ENCODE measurements at regions of chr19 and their contacts with region 1.

Region 1: GRCh38 chr19:41883821-41884733 is 1.1 kb downstream of the ARHGEF1 start:
- DNase-seq: peak; percentile 69 to 91 (median 79)
- ATAC-seq: peak; percentile 82
- H3K4me3 ChIP-seq: peak overlapping the region; percentile 99
- H3K4me3 Mint-ChIP-seq: peak overlapping the region; percentile 92 to 100 (median 98)
- H3K27ac ChIP-seq: peak overlapping the region; percentile 84
- H3K27ac Mint-ChIP-seq: peak overlapping the region; percentile 93 to 99 (median 98)
- H3K4me1 ChIP-seq: peaks cover 34 to 44% of the 10 kb centered on the region in 2 donors
- H3K4me1 Mint-ChIP-seq: peaks cover 41 to 58% (median 51%) of the 10 kb centered on the region in 7 donors
- H3K27me3 ChIP-seq: no peaks in the 10 kb centered on the region
- H3K27me3 Mint-ChIP-seq: no peaks in the 10 kb centered on the region

Region 2: DNA sequence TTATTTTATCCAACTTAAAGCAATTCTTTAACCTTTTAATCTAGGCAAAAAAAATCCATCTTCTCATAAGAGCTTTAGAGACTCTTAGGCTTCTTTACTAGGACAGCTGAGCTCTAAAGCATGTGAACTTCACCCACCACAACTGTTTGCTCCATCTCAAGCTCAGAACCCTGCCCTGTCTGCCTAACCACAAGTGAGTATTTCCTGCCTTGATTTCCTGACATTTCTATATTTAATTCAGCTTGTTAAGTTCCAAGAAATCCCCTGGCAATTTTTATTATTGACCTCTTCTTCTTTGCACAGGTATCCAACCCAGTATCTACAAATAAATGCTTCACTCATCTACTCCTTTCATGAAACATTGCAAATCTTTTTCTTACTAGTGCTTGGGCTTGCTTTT is 329.2 kb before region 1 on chr19:
- CTCF ChIA-PET with region 1: no interaction called
- POLR2A ChIA-PET with region 1: interaction called, 3 read pairs
- intact Hi-C with region 1: loop called in 1 of 2 experiments (anchors 10 kb)
- DNase-seq: peak in 7 of 9 donors; percentile 62 to 78 (median 73)
- ATAC-seq: peak; percentile 88
- H3K4me3 ChIP-seq: peak overlapping the region; percentile 77
- H3K4me3 Mint-ChIP-seq: peak overlapping the region; percentile 39 to 100 (median 97)
- H3K27ac ChIP-seq: peak overlapping the region; percentile 88
- H3K27ac Mint-ChIP-seq: peak overlapping the region; percentile 25 to 97 (median 95)
- H3K4me1 ChIP-seq: peaks cover 50 to 65% of the 10 kb centered on the region in 2 donors
- H3K4me1 Mint-ChIP-seq: peaks cover 43 to 76% (median 69%) of the 10 kb centered on the region in 7 donors
- H3K27me3 ChIP-seq: no peaks in the 10 kb centered on the region
- H3K27me3 Mint-ChIP-seq: no peaks in the 10 kb centered on the region

Region 3: DNA sequence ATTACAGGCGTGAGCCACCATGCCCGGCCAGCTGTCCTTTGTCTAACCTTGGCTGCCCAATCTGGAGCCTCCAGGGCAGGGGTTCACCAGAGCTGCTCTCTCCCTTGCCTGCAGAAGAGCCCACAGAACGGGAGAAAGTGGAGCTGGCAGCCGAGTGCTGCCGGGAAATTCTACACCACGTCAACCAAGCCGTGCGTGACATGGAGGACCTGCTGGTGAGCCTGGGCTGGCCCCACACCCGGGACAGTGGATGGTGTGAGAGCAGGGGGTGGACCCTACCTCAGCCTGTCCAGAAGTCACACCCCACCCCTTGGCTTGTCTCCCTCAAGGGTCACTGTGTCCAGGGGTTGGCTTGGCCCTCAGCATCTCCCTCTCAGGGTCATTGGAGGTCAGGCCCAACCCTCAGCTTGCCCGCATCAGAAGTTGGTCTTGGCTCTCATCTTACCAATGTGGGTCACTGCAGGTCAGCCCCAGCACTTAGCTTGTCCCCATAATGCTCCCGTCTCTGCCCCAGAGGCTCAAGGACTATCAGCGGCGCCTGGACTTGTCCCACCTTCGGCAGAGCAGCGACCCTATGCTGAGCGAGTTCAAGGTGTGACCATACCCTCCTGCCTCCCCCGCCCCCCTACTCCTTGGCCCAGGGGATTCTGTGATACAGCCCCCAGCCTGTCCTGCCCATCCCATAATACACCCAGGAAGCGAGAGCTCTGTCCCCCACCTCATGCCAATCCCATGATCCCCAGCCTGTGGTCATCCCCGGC is 19.3 kb after region 1 on chr19:
- CTCF ChIA-PET with region 1: interaction called, 6 read pairs
- POLR2A ChIA-PET with region 1: interaction called, 348 read pairs
- intact Hi-C with region 1: loop called in 1 of 2 experiments (anchors 2 kb)
- DNase-seq: no peak
- ATAC-seq: no peak
- H3K4me3 ChIP-seq: no peak overlapping the region
- H3K4me3 Mint-ChIP-seq: peak overlapping the region in 2 of 10 donors; percentile 39 to 49
- H3K27ac ChIP-seq: peak overlapping the region; percentile 38
- H3K27ac Mint-ChIP-seq: peak overlapping the region in 4 of 9 donors; percentile 52 to 87 (median 64)
- H3K4me1 ChIP-seq: peaks cover 0 to 28% of the 10 kb centered on the region in 2 donors
- H3K4me1 Mint-ChIP-seq: peaks cover 31 to 61% (median 48%) of the 10 kb centered on the region in 7 donors
- H3K27me3 ChIP-seq: no peaks in the 10 kb centered on the region
- H3K27me3 Mint-ChIP-seq: no peaks in the 10 kb centered on the region

Region 4: GRCh38 chr19:41934849-41935374 is 50.8 kb after region 1 on chr19:
- CTCF ChIA-PET with region 1: interaction called, 4 read pairs
- POLR2A ChIA-PET with region 1: interaction called, 106 read pairs
- intact Hi-C with region 1: loop called (anchors 1 to 2 kb)
- DNase-seq: peak; percentile 47 to 78 (median 67)
- ATAC-seq: peak; percentile 83
- H3K4me3 ChIP-seq: no peak overlapping the region
- H3K4me3 Mint-ChIP-seq: peak overlapping the region in 4 of 10 donors; percentile 30 to 66 (median 33)
- H3K27ac ChIP-seq: peak overlapping the region; percentile 40
- H3K27ac Mint-ChIP-seq: peak overlapping the region; percentile 46 to 88 (median 81)
- H3K4me1 ChIP-seq: peaks cover 26 to 29% of the 10 kb centered on the region in 2 donors
- H3K4me1 Mint-ChIP-seq: peaks cover 37 to 63% (median 48%) of the 10 kb centered on the region in 7 donors
- H3K27me3 ChIP-seq: peaks cover 0 to 4% of the 10 kb centered on the region in 2 donors
- H3K27me3 Mint-ChIP-seq: peaks cover 0 to 24% (median 0%) of the 10 kb centered on the region in 5 donors

Region 5: GRCh38 chr19:41959056-41960053 is 75.3 kb after region 1 on chr19 and contains the start of gene RABAC1:
- CTCF ChIA-PET with region 1: no interaction called
- POLR2A ChIA-PET with region 1: interaction called, 26 read pairs
- intact Hi-C with region 1: loop called (anchors 1 to 2 kb)
- DNase-seq: peak; percentile 67 to 91 (median 86)
- ATAC-seq: peak; percentile 95
- H3K4me3 ChIP-seq: peak within 1 kb of the TSS; percentile 78
- H3K4me3 Mint-ChIP-seq: peak within 1 kb of the TSS; percentile 80 to 99 (median 91)
- H3K27ac ChIP-seq: peak within 1 kb of the TSS; percentile 81
- H3K27ac Mint-ChIP-seq: peak within 1 kb of the TSS; percentile 74 to 94 (median 90)
- H3K4me1 ChIP-seq: peaks cover 8 to 9% of the 10 kb centered on the region in 2 donors
- H3K4me1 Mint-ChIP-seq: peaks cover 17 to 22% (median 18%) of the 10 kb centered on the region in 7 donors
- H3K27me3 ChIP-seq: no peaks in the 10 kb centered on the region
- H3K27me3 Mint-ChIP-seq: no peaks in the 10 kb centered on the region
- total RNA-seq, gene RABAC1: 70.4 to 90.9 (median 78.1) TPM

Region 6: DNA sequence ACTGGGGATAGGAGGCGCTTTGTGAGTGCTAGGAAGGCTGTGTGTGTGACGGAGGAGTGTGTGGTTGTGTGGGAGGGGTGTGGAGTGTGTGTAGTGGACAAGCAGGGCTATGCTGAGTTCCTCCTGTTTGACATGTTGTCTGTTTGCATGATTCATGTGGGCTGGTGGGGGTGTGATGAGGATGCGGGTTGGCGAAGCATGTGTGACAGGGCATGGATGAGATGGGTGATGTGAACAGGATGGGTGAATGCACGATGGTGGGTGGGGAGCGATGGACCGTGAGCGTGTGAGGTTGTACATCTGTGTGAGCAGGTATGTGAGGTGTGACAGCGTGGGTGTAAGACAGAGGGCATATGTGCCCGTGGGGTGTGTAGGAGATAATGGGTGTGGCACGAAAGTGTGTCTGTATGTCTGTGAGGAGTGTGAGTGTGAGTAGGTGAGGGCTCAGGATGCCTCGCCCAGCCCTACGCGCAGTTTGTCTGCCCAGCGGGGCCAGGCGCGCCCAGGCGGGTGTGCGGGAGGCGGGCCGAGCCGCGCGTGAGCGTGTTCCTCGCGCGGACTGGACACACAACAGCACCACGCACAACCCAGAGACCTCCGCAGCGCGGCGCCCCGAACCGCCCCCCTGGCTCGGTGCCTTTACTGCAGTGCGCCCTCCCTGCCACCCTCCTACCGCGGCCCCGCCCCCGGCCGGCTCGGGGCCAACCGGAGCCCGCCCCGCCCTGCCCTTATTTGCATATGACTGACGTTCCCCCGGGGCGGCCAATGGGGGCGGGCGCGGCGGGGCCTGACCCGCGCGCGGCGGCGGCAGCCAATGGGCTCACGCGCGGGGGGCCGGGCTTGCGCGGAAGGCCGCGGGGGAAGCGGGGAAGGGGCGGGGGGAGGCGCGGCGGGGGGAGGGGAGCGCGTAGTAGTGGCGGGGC is 399.3 kb after region 1 on chr19:
- CTCF ChIA-PET with region 1: no interaction called
- POLR2A ChIA-PET with region 1: interaction called, 5 read pairs
- intact Hi-C with region 1: loop called (anchors 5 to 10 kb)
- DNase-seq: peak; percentile 93 to 97 (median 95)
- ATAC-seq: peak; percentile 83
- H3K4me3 ChIP-seq: peak overlapping the region; percentile 50
- H3K4me3 Mint-ChIP-seq: peak overlapping the region in 1 of 10 donors; percentile 0
- H3K27ac ChIP-seq: peak overlapping the region; percentile 83
- H3K27ac Mint-ChIP-seq: no peak overlapping the region
- H3K4me1 ChIP-seq: peaks cover 42 to 45% of the 10 kb centered on the region in 2 donors
- H3K4me1 Mint-ChIP-seq: peaks cover 22 to 44% (median 32%) of the 10 kb centered on the region in 7 donors
- H3K27me3 ChIP-seq: no peaks in the 10 kb centered on the region
- H3K27me3 Mint-ChIP-seq: no peaks in the 10 kb centered on the region

Measured in naive thymus-derived CD4-positive, alpha-beta T cell (primary cell).